Aorta (tissue), 5 donors: ENCODE measurements at regions of chr6 and their contacts with region 1.

Region 1: GRCh38 chr6:139981768-139982181 is 607.3 kb upstream of the CITED2 start:
- DNase-seq: no peak
- ATAC-seq: peak; percentile 51
- H3K4me3 ChIP-seq: no peak overlapping the region
- H3K27ac ChIP-seq: peak overlapping the region in 1 of 2 donors; percentile 63
- H3K4me1 ChIP-seq: peaks cover 2 to 6% of the 10 kb centered on the region in 2 donors
- H3K27me3 ChIP-seq: no peaks in the 10 kb centered on the region

Region 2: GRCh38 chr6:139881728-139882211 is 100.0 kb before region 1 on chr6:
- intact Hi-C with region 1: loop called in 1 of 2 experiments (anchors 10 kb)
- DNase-seq: no peak
- ATAC-seq: peak; percentile 62
- H3K4me3 ChIP-seq: no peak overlapping the region
- H3K27ac ChIP-seq: peak overlapping the region in 1 of 2 donors; percentile 66
- H3K4me1 ChIP-seq: peaks cover 3 to 4% of the 10 kb centered on the region in 2 donors
- H3K27me3 ChIP-seq: no peaks in the 10 kb centered on the region

Region 3: GRCh38 chr6:140078561-140079125 is 96.9 kb after region 1 on chr6:
- intact Hi-C with region 1: loop called in 1 of 2 experiments (anchors 10 kb)
- DNase-seq: no peak
- ATAC-seq: peak; percentile 84
- H3K4me3 ChIP-seq: peak overlapping the region in 1 of 2 donors; percentile 34
- H3K27ac ChIP-seq: peak overlapping the region in 1 of 2 donors; percentile 57
- H3K4me1 ChIP-seq: peaks cover 0 to 4% of the 10 kb centered on the region in 2 donors
- H3K27me3 ChIP-seq: no peaks in the 10 kb centered on the region